Mammary epithelial cell (primary cell): ENCODE measurements at regions of chrX and their contacts with region 1.

Region 1: GRCh38 chrX:10189317-10190268 is 32.8 kb downstream of the CLCN4 start:
- DNase-seq: peak; percentile 51
- H3K4me3 ChIP-seq: no peak overlapping the region
- H3K27ac ChIP-seq: no peak overlapping the region
- H3K4me1 ChIP-seq: no peaks in the 10 kb centered on the region
- H3K27me3 ChIP-seq: no peaks in the 10 kb centered on the region
- CTCF ChIP-seq: peak; percentile 73 to 79

Region 2: DNA sequence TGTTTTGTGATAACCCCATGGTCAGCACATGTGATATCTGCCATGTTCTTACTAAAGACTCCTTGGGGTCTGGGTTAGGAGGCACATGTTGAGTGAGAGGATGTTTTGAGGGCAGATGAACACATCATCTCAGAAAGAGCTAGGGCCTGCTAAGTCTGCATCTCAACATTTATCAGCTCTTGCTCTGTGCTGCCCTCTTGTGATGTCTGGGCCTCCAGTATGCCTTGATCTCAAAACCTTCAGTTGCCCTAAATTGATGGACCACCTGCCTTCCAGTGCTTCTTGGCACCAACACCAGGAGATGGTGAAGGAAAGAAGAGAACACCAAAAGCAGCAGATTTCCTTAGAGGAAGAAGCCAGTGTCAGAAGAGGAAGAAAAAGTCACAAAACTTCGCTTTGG is 408.3 kb after region 1 on chrX:
- CTCF ChIA-PET with region 1: no interaction called
- dilution Hi-C with region 1: no loop called
- in situ Hi-C with region 1: loop called in 1 of 2 experiments (anchors 25 kb)
- intact Hi-C with region 1: loop called (anchors 1 kb)
- DNase-seq: no peak
- H3K4me3 ChIP-seq: no peak overlapping the region
- H3K27ac ChIP-seq: no peak overlapping the region
- H3K4me1 ChIP-seq: no peaks in the 10 kb centered on the region
- H3K27me3 ChIP-seq: no peaks in the 10 kb centered on the region
- CTCF ChIP-seq: peak; percentile 43 to 65

Region 3: GRCh38 chrX:10648614-10649013 is 459.0 kb after region 1 on chrX:
- CTCF ChIA-PET with region 1: no interaction called
- dilution Hi-C with region 1: loop called (anchors 10 kb)
- in situ Hi-C with region 1: loop called in 1 of 2 experiments (anchors 25 kb)
- intact Hi-C with region 1: no loop called
- DNase-seq: no peak
- H3K4me3 ChIP-seq: no peak overlapping the region
- H3K27ac ChIP-seq: no peak overlapping the region
- H3K4me1 ChIP-seq: no peaks in the 10 kb centered on the region
- H3K27me3 ChIP-seq: no peaks in the 10 kb centered on the region
- CTCF ChIP-seq: no peak

Region 4: DNA sequence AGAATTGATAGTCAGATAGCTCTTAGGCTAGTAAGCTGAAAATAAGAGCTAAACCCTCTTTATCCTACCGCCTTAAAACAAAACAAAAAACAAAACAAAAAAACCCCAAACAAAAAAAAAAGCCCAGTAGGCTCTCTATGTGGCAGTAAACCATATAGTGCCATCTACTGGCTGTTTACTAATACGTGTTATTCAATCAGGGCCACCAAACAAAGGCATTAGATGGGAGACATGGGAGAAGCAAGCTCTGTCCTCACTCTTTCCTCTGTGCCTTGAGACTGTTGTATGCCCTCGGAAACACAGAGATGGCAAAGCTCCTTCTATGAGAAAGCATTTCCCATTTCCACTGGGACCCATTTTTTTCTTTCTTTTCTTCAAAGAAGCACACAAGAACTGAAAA is 579.6 kb after region 1 on chrX:
- CTCF ChIA-PET with region 1: no interaction called
- dilution Hi-C with region 1: no loop called
- in situ Hi-C with region 1: no loop called
- intact Hi-C with region 1: loop called (anchors 1 kb)
- DNase-seq: peak; percentile 12
- H3K4me3 ChIP-seq: no peak overlapping the region
- H3K27ac ChIP-seq: no peak overlapping the region
- H3K4me1 ChIP-seq: peaks cover 4% of the 10 kb centered on the region
- H3K27me3 ChIP-seq: no peaks in the 10 kb centered on the region
- CTCF ChIP-seq: peak; percentile 36 to 61

Region 5: DNA sequence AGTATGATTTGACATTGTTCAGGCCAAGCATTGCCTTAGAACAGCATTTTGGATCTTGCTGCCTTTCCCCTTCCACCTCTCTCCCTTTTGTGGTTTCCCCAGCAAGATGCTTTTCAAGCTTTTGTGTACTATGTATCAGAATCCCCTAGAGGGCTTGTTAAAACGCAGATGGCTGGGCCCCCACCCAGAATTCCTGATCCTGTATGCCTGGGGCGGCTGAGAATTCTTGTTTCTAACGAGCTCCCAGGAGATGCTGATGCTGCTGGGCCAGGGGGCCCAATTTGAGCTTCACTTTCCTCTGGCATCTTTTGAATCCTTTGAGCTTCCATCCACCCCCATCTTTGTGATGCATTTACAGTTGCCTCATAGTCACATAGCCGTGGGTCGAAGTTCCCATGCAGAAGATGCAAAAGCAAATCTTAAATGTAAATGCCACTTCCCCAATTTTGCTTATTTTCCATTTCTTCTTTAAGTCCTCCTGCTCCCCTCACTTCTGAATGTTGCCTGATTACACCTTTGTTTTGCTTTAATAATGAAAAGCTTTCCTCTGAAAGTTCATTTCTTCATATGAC is 940.0 kb after region 1 on chrX:
- CTCF ChIA-PET with region 1: no interaction called
- dilution Hi-C with region 1: loop called (anchors 25 kb)
- in situ Hi-C with region 1: loop called (anchors 5 to 25 kb)
- intact Hi-C with region 1: no loop called
- DNase-seq: no peak
- H3K4me3 ChIP-seq: no peak overlapping the region
- H3K27ac ChIP-seq: no peak overlapping the region
- H3K4me1 ChIP-seq: no peaks in the 10 kb centered on the region
- H3K27me3 ChIP-seq: no peaks in the 10 kb centered on the region
- CTCF ChIP-seq: no peak

Region 6: DNA sequence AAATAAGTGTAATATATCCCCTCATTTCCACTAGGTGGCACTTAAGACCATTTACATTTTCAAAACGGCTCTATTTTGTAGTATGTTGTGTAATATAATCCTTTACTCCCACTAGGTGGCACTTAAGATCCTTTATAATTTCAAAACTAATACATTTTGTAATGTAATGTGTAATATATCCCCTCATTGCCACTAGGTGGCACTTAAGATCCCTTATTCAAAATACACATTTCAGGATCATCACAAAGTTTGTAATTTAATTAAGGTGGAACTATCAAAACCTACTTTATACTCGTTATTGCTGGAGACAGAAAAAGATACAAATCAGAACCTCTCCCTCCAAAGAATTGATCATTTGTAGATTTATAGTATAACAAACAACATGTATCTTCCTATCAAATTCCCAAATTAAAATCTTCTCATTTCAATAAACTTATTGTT is 1343.6 kb after region 1 on chrX:
- CTCF ChIA-PET with region 1: no interaction called
- dilution Hi-C with region 1: no loop called
- in situ Hi-C with region 1: no loop called
- intact Hi-C with region 1: loop called (anchors 5 kb)
- DNase-seq: peak; percentile 64
- H3K4me3 ChIP-seq: no peak overlapping the region
- H3K27ac ChIP-seq: no peak overlapping the region
- H3K4me1 ChIP-seq: no peaks in the 10 kb centered on the region
- H3K27me3 ChIP-seq: peaks cover 3% of the 10 kb centered on the region
- CTCF ChIP-seq: peak; percentile 70 to 89